CD14-positive monocyte (primary cell): ENCODE measurements at regions of chr3 and their contacts with region 1.

Region 1: DNA sequence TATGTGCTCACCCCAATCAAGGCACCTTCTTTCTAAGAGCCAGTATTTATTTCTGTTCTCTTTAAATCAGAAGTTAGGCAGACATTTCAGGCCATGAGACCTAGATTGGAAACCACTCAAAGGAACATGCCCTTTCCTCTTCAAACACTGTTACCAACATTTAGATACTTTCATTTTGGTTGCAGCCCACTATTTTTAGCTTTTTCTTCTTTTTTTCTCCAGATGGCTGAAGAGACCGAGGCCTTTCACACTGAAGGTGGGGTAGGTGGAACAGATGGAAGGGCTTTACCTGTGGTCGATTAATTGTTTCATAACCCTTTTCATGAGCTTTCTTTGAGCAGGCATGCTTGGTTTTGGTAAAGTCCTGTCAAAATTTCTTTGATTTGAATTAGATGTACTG is 10.9 kb upstream of the LZTFL1 start:
- DNase-seq: no peak
- H3K4me3 ChIP-seq: no peak overlapping the region
- H3K4me3 Mint-ChIP-seq: no peak overlapping the region
- H3K27ac ChIP-seq: no peak overlapping the region
- H3K27ac Mint-ChIP-seq: peak overlapping the region in 1 of 7 donors; percentile 10
- H3K4me1 ChIP-seq: no peaks in the 10 kb centered on the region
- H3K4me1 Mint-ChIP-seq: no peaks in the 10 kb centered on the region
- H3K27me3 ChIP-seq: peaks cover 0 to 5% of the 10 kb centered on the region in 2 donors
- H3K27me3 Mint-ChIP-seq: peaks cover 10 to 13% (median 10%) of the 10 kb centered on the region in 3 donors
- CTCF ChIP-seq: no peak

Region 2: DNA sequence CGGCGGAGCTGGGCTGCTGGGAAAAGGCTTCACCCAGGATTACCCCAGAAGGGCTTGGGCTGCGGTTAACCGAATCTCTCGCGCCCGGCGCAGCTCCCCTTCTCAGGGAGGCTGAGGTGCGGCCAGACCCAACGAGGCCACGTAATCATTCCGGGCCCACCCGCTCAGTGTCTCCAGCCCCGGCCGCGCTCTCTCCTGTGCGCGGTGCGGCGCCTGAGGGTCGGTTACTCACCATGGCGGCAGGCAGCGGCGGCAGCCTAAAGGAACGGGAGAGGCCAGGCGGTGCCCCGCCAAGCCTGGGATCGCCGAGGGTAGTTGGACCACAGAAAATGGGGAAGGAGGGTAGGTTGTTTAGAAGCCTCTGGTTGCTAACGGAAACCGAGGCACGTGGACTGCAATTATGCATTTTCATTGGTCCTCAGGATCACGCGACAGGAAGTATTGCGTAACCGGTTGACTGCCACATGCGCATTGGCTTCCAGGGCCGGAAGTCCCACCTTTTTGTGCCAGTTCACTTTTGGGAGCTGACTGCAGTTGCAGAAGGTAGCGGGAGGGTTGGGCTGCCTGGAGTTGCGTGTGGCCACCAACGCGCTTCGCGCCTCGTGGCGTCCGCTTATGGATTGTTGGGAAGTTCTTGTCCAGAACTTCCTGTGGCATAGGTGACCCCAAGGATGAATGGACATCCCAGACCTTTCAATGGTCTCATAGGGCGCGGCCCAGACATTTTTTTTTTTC is 10.9 kb before region 1 on chr3 and contains the start of gene LZTFL1:
- intact Hi-C with region 1: loop called in 1 of 2 experiments (anchors 1 kb)
- DNase-seq: peak; percentile 96 to 97 (median 97)
- H3K4me3 ChIP-seq: peak within 1 kb of the TSS; percentile 66 to 81 (median 79)
- H3K4me3 Mint-ChIP-seq: peak within 1 kb of the TSS; percentile 86 to 94
- H3K27ac ChIP-seq: peak within 1 kb of the TSS; percentile 15 to 64
- H3K27ac Mint-ChIP-seq: peak within 1 kb of the TSS in 6 of 7 donors; percentile 74 to 89 (median 86)
- H3K4me1 ChIP-seq: peaks cover 18 to 19% of the 10 kb centered on the region in 2 donors
- H3K4me1 Mint-ChIP-seq: peaks cover 25% of the 10 kb centered on the region
- H3K27me3 ChIP-seq: peaks cover 2 to 9% of the 10 kb centered on the region in 2 donors
- H3K27me3 Mint-ChIP-seq: peaks cover 5 to 17% (median 11%) of the 10 kb centered on the region in 3 donors
- CTCF ChIP-seq: no peak
- polyA plus RNA-seq, gene LZTFL1: 7.3 to 10.5 (median 7.5) TPM